PC-9 (cell line): ENCODE measurements at regions of chr15 and their contacts with region 1.

Region 1: GRCh38 chr15:100759698-100760356 is 119.8 kb upstream of the ALDH1A3 start:
- DNase-seq: peak; percentile 67 to 88
- H3K4me3 ChIP-seq: no peak overlapping the region
- H3K27ac ChIP-seq: peak overlapping the region; percentile 73
- H3K4me1 ChIP-seq: peaks cover 43% of the 10 kb centered on the region
- H3K27me3 ChIP-seq: no peaks in the 10 kb centered on the region
- CTCF ChIP-seq: no peak

Region 2: DNA sequence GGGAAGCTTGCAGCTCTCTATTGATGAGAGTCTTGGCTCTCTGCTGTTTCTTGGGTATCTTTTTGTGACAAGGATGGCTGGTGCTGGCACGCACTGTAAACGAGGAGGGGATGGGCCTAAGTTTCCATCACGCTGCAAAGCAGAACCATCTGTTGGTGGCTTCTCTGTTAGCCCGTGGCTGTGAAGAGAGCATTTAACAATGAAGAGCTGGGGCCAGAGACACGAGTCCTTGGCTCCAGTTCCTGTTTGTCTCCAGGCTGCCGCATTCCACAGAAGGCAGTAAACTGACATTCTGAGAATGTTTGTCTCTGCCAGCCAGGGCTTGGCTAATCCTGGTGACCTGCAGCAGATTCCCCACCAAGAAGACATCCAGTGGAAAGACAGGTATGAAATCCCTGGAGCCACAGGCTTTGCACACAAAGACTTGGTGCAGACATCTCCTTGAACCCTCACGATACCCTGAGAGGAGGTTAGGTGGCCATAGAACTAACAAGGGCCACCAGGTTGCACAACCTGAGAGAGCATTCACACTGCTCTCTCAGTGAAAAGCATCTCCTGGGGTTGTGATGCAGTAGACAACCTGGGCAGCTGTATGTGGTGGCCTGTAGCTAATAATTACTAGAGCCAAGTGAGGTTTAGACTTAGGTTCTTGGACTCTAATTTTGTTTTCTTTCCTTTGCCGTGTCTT is 26.6 kb before region 1 on chr15:
- CTCF ChIA-PET with region 1: no interaction called
- POLR2A ChIA-PET with region 1: interaction called, 4 read pairs
- intact Hi-C with region 1: loop called (anchors 2 kb)
- DNase-seq: peak; percentile 65 to 88
- H3K4me3 ChIP-seq: 0 out of 2 replicates have a peak overlapping the region, but pooled peaks have one; percentile 15
- H3K27ac ChIP-seq: peak overlapping the region; percentile 92
- H3K4me1 ChIP-seq: peaks cover 33% of the 10 kb centered on the region
- H3K27me3 ChIP-seq: no peaks in the 10 kb centered on the region
- CTCF ChIP-seq: no peak

Region 3: DNA sequence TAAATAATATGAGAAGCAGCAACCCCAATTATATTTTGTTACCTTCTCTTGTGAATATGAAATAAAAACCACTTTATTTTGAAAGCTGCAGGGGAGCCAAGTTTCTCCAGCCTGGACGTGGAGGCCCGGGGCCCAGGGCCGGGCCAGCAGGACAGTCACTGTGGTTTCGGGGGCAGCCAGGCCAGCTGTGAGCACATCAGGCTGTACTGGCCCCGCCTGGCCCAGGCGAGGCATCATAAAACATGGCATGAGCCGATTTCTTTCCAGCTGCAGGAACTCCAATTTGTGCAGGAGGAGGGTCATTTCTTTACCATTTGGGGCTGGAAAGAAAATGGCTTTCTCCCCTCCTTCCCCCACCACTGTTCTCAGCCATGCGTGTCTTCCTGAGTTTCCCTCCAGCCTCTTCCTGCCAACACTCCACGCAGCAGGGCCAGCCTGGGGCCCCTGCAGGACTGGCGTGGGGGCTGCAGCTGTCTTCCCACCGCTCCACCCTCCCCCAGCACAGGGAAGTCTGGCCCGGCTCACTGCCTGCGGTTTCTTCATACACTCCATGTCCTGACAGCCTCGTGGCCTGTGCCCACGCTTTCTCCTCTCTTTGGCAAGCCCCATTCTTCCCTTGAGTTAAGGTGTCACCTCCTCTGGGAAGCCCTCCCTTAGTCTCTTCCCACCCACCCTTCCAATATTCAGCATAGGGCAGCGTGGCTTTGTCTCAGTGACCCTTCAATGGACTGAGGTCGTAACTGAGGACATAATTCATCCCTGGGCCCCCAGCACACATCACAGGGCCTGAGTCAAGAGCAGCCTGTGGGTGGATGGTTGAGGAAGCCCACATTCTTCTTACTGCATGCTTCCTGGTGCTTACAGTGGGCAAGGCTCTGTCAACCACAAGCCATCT is 356.2 kb after region 1 on chr15:
- CTCF ChIA-PET with region 1: no interaction called
- POLR2A ChIA-PET with region 1: no interaction called
- intact Hi-C with region 1: no loop called
- DNase-seq: no peak
- H3K4me3 ChIP-seq: no peak overlapping the region
- H3K27ac ChIP-seq: no peak overlapping the region
- H3K4me1 ChIP-seq: no peaks in the 10 kb centered on the region
- H3K27me3 ChIP-seq: no peaks in the 10 kb centered on the region
- CTCF ChIP-seq: no peak

Region 4: GRCh38 chr15:101633356-101633755 is 873.5 kb after region 1 on chr15:
- CTCF ChIA-PET with region 1: no interaction called
- POLR2A ChIA-PET with region 1: interaction called, 13 read pairs
- intact Hi-C with region 1: no loop called
- DNase-seq: no peak
- H3K4me3 ChIP-seq: no peak overlapping the region
- H3K27ac ChIP-seq: no peak overlapping the region
- H3K4me1 ChIP-seq: peaks cover 18% of the 10 kb centered on the region
- H3K27me3 ChIP-seq: no peaks in the 10 kb centered on the region
- CTCF ChIP-seq: no peak